Pancreas (tissue), 10 donors: ENCODE measurements at regions of chr4 and their contacts with region 1.

Region 1: GRCh38 chr4:140252742-140253555 is 99.0 kb upstream of the MAML3 start:
- DNase-seq: peak; percentile 56 to 92 (median 76)
- ATAC-seq: peak; percentile 87 to 93 (median 92)
- H3K4me3 ChIP-seq: peak overlapping the region; percentile 49 to 71 (median 52)
- H3K27ac ChIP-seq: peak overlapping the region; percentile 67 to 92 (median 78)
- H3K4me1 ChIP-seq: peaks cover 0 to 13% (median 6%) of the 10 kb centered on the region in 3 donors
- H3K27me3 ChIP-seq: no peaks in the 10 kb centered on the region
- CTCF ChIP-seq: peak; percentile 77 to 96 (median 92)

Region 2: GRCh38 chr4:139734875-139735380 is 518.0 kb before region 1 on chr4:
- intact Hi-C with region 1: loop called in 1 of 3 experiments (anchors 10 kb)
- DNase-seq: peak; percentile 87 to 95 (median 92)
- ATAC-seq: peak; percentile 92 to 96 (median 95)
- H3K4me3 ChIP-seq: peak overlapping the region; percentile 9 to 52 (median 18)
- H3K27ac ChIP-seq: peak overlapping the region; percentile 20 to 80 (median 66)
- H3K4me1 ChIP-seq: peaks cover 15 to 22% (median 18%) of the 10 kb centered on the region in 3 donors
- H3K27me3 ChIP-seq: no peaks in the 10 kb centered on the region
- CTCF ChIP-seq: peak; percentile 43 to 71 (median 68)

Region 3: DNA sequence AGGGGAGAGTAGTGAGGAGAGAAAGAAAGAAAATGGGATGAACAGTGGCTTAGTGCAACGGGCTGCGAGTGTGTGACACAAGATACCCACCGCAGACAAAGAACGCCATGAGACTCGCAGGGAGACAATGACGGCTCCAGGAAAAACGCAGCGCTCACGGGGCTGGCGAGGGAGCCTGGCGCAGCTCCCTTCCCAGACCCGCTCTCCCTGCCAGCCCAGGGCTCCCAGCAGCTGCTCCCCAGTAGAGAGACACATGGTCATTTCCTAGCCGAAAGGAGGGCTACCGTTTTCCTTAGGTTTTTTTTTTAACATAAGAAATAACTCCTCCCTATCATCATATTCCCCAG is 248.4 kb before region 1 on chr4:
- intact Hi-C with region 1: loop called in 1 of 3 experiments (anchors 10 kb)
- DNase-seq: peak; percentile 34 to 77 (median 56)
- ATAC-seq: peak; percentile 84 to 95 (median 90)
- H3K4me3 ChIP-seq: peak overlapping the region in 3 of 4 donors; percentile 4 to 40 (median 7)
- H3K27ac ChIP-seq: peak overlapping the region in 2 of 4 donors; percentile 53 to 63
- H3K4me1 ChIP-seq: peaks cover 0 to 15% (median 5%) of the 10 kb centered on the region in 3 donors
- H3K27me3 ChIP-seq: no peaks in the 10 kb centered on the region
- CTCF ChIP-seq: no peak

Region 4: DNA sequence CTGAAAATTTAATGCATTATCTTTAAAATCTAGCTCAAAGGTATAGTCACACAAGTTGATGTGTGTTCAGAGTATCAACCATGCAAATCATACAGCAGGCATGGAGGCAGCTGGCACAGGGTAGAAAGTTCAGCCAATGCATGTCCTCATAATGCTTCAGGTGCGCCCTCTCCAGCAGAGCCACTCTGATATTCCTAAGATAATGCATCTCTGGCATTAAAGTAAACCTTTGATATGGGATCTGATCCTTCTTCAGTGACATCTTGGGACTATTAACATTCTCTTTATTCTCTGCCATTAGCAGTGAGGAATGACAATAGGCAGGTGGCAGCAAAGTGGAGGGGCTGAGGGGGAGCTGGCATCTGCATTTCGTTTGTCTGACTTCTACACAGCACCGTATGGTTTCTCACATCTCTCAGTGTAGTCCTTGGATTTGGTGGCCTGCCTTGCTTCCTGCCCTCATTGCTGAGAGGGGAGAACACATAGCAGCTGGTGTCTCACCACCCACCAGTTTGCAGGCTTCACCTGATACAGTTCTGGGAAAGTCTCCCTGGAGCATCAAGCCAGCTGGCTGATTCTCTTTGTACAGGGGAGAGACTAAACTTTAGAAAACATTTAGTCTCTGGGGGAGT is 671.9 kb after region 1 on chr4:
- intact Hi-C with region 1: no loop called
- DNase-seq: no peak
- ATAC-seq: no peak
- H3K4me3 ChIP-seq: no peak overlapping the region
- H3K27ac ChIP-seq: no peak overlapping the region
- H3K4me1 ChIP-seq: no peaks in the 10 kb centered on the region
- H3K27me3 ChIP-seq: no peaks in the 10 kb centered on the region
- CTCF ChIP-seq: no peak